Psoas muscle (tissue), 8 donors: ENCODE measurements at regions of chr17 and their contacts with region 1.

Region 1: GRCh38 chr17:34318474-34318873 is 761 bp upstream of the CCL8 start:
- DNase-seq: no peak
- ATAC-seq: no peak
- H3K4me3 ChIP-seq: no peak overlapping the region
- H3K27ac ChIP-seq: no peak overlapping the region
- H3K4me1 ChIP-seq: no peaks in the 10 kb centered on the region
- H3K27me3 ChIP-seq: no peaks in the 10 kb centered on the region
- CTCF ChIP-seq: no peak

Region 2: DNA sequence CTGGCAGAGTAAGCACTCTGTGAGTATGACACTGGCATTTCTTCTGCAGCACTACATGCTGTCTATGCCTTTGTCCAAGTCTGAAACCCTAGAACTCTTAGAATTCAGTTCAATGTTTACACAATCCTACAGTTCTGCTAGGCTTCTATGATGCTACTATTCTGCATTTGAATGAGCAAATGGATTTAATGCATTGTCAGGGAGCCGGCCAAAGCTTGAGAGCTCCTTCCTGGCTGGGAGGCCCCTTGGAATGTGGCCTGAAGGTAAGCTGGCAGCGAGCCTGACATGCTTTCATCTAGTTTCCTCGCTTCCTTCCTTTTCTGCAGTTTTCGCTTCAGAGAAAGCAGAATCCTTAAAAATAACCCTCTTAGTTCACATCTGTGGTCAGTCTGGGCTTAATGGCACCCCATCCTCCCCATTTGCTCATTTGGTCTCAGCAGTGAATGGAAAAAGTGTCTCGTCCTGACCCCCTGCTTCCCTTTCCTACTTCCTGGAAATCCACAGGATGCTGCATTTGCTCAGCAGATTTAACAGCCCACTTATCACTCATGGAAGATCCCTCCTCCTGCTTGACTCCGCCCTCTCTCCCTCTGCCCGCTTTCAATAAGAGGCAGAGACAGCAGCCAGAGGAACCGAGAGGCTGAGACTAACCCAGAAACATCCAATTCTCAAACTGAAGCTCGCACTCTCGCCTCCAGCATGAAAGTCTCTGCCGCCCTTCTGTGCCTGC is 63.7 kb before region 1 on chr17 and contains the start of gene CCL2:
- intact Hi-C with region 1: loop called in 1 of 2 experiments (anchors 5 kb)
- DNase-seq: peak; percentile 62 to 68
- ATAC-seq: peak; percentile 46 to 56 (median 52)
- H3K4me3 ChIP-seq: peak within 1 kb of the TSS; percentile 63
- H3K27ac ChIP-seq: peak within 1 kb of the TSS; percentile 58
- H3K4me1 ChIP-seq: peaks cover 34% of the 10 kb centered on the region
- H3K27me3 ChIP-seq: peaks cover 0 to 12% (median 0%) of the 10 kb centered on the region in 3 donors
- CTCF ChIP-seq: no peak
- total RNA-seq, gene CCL2: 5.0 to 28.3 (median 17.2) TPM